GM18951 (cell line): ENCODE measurements at regions of chr12 and their contacts with region 1.

Region 1: GRCh38 chr12:102694913-102695312 is 214.6 kb upstream of the IGF1 start:
- POLR2A ChIP-seq: no peak

Region 2: DNA sequence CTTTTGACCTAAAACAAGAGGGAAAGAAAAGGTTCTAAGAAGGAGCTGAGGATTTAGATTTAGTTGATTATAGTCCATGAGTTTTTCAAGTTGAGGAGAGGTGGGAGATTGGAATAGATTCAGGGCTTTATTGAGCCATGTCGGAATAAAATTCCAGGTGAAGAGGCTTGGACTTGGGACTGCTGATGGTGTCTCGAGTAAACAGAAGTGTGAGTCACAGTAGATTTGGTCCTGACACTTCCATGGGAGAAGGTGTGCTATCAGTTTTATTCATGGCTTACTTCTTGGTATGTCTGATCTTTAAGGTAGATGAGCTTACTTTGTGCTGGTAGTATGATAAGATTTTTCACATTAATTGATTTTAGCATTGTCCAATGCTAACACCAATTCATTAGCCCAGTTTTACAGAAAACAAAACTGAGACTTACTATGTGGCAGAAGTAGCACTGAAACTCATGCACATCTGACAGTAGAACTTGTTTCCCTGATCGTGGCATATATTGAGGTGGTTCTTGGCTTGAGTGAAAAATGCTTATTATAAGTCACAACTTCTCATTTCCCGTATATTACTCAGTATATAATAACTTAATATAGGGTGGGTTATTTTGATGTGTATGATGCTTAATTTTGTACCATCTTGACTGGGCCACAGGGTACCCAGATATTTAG is 42.1 kb before region 1 on chr12:
- in situ Hi-C with region 1: loop called (anchors 5 kb)
- POLR2A ChIP-seq: no peak

Region 3: GRCh38 chr12:103036581-103037214 is 341.8 kb after region 1 on chr12:
- in situ Hi-C with region 1: no loop called
- POLR2A ChIP-seq: no peak